Activated CD8-positive, alpha-beta T cell treated with anti-CD3 and anti-CD28 coated beads, Interleukin-2, amount 10 ng/mL, durations not matched to agents 7 days and 5 days (primary cell): ENCODE measurements at regions of chr12 and their contacts with region 1.

Region 1: GRCh38 chr12:3885277-3886094 is 12.3 kb upstream of the PARP11 start:
- DNase-seq: peak; percentile 65
- ATAC-seq: peak; percentile 43
- H3K4me3 Mint-ChIP-seq: no peak overlapping the region
- H3K27ac Mint-ChIP-seq: peak overlapping the region; percentile 8
- H3K4me1 Mint-ChIP-seq: peaks cover 12% of the 10 kb centered on the region
- H3K27me3 Mint-ChIP-seq: peaks cover 7% of the 10 kb centered on the region

Region 2: DNA sequence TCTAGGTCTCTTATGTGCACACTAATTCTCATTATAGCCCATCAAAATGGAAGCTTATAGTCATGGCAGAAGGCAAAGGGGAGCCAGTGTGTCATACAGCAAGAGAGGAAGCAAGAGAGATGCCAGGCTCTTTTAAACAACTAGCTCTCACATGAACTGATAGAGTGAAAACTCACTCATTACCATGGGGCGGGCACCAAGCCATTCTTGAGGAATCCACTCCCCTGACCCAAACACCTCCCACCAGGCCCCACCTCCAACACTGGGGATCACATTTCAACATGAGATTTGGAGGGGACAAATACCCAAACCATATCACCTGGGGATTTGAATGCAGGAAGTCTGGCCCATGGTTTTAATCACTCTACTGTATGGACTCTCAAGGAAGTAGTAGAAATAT is 95.6 kb before region 1 on chr12:
- CTCF ChIA-PET with region 1: no interaction called
- POLR2A ChIA-PET with region 1: no interaction called
- DNase-seq: no peak
- ATAC-seq: no peak
- H3K4me3 Mint-ChIP-seq: no peak overlapping the region
- H3K27ac Mint-ChIP-seq: no peak overlapping the region
- H3K4me1 Mint-ChIP-seq: no peaks in the 10 kb centered on the region
- H3K27me3 Mint-ChIP-seq: no peaks in the 10 kb centered on the region

Region 3: GRCh38 chr12:3896801-3897331 is 11.4 kb after region 1 on chr12:
- CTCF ChIA-PET with region 1: interaction called, 84 read pairs
- POLR2A ChIA-PET with region 1: interaction called, 3 read pairs
- DNase-seq: no peak
- ATAC-seq: peak; percentile 34
- H3K4me3 Mint-ChIP-seq: peak overlapping the region; percentile 58
- H3K27ac Mint-ChIP-seq: peak overlapping the region; percentile 96
- H3K4me1 Mint-ChIP-seq: peaks cover 32% of the 10 kb centered on the region
- H3K27me3 Mint-ChIP-seq: no peaks in the 10 kb centered on the region

Region 4: GRCh38 chr12:3964439-3964838 is 79.0 kb after region 1 on chr12:
- CTCF ChIA-PET with region 1: interaction called, 166 read pairs
- POLR2A ChIA-PET with region 1: interaction called, 12 read pairs
- DNase-seq: no peak
- ATAC-seq: no peak
- H3K4me3 Mint-ChIP-seq: no peak overlapping the region
- H3K27ac Mint-ChIP-seq: no peak overlapping the region
- H3K4me1 Mint-ChIP-seq: peaks cover 20% of the 10 kb centered on the region
- H3K27me3 Mint-ChIP-seq: peaks cover 2% of the 10 kb centered on the region

Region 5: GRCh38 chr12:3998968-3999826 is 113.7 kb after region 1 on chr12:
- CTCF ChIA-PET with region 1: interaction called, 186 read pairs
- POLR2A ChIA-PET with region 1: no interaction called
- DNase-seq: no peak
- ATAC-seq: no peak
- H3K4me3 Mint-ChIP-seq: no peak overlapping the region
- H3K27ac Mint-ChIP-seq: no peak overlapping the region
- H3K4me1 Mint-ChIP-seq: peaks cover 39% of the 10 kb centered on the region
- H3K27me3 Mint-ChIP-seq: no peaks in the 10 kb centered on the region

Region 6: GRCh38 chr12:4148418-4149056 is 263.1 kb after region 1 on chr12:
- CTCF ChIA-PET with region 1: interaction called, 10 read pairs
- POLR2A ChIA-PET with region 1: no interaction called
- DNase-seq: peak; percentile 39
- ATAC-seq: no peak
- H3K4me3 Mint-ChIP-seq: no peak overlapping the region
- H3K27ac Mint-ChIP-seq: peak overlapping the region; percentile 74
- H3K4me1 Mint-ChIP-seq: peaks cover 96% of the 10 kb centered on the region
- H3K27me3 Mint-ChIP-seq: no peaks in the 10 kb centered on the region

Region 7: GRCh38 chr12:4293299-4293965 is 407.9 kb after region 1 on chr12:
- CTCF ChIA-PET with region 1: interaction called, 27 read pairs
- POLR2A ChIA-PET with region 1: no interaction called
- DNase-seq: peak; percentile 57
- ATAC-seq: peak; percentile 76
- H3K4me3 Mint-ChIP-seq: peak overlapping the region; percentile 55
- H3K27ac Mint-ChIP-seq: peak overlapping the region; percentile 94
- H3K4me1 Mint-ChIP-seq: peaks cover 77% of the 10 kb centered on the region
- H3K27me3 Mint-ChIP-seq: no peaks in the 10 kb centered on the region